Head of caudate nucleus (tissue), 42 donors: ENCODE measurements at regions of chr4 and their contacts with region 1.

Region 1: GRCh38 chr4:67988991-67989390 is 25.7 kb upstream of the TMPRSS11A start:
- DNase-seq: no peak

Region 2: DNA sequence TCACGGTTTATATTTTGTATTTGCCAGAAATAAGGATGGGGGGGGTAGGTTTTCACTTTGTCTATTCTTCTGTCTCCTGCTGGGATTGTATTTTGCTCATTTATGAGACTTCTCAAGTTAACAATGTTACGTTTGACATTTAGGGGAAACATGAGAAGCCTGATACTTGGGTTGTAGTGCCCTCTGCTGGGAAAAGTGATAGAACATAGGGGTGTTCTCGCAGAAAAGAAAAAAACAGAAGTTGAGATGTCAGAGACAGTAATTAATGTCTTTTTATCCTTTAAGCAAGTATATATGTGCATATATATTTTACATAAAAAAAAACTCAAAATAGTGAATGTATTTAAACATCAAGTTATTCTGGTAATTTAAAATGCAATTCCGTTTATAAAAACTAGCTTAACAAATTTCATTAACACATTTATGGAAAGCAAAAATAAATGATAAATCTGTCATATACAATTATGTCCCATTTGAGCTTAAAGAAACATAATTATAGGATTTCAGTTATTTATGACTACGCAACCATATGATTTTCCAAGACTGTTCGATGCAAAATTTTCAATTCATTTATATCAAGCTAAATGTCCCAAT is 186.7 kb after region 1 on chr4:
- intact Hi-C with region 1: loop called (anchors 5 kb)
- DNase-seq: peak in 33 of 42 donors; percentile 25 to 87 (median 61)